ENCODE measurements at regions of chr4 and their contacts with region 1.

Region 1: GRCh38 chr4:183012879-183013728 is 86.0 kb upstream of the WWC2 start:
- DNase-seq: no peak
- ATAC-seq: no peak
- H3K4me3 ChIP-seq: no peak overlapping the region
- H3K27ac ChIP-seq: no peak overlapping the region
- H3K4me1 ChIP-seq: peaks cover 3% of the 10 kb centered on the region; the same call in 1 of the 2 replicates
- H3K27me3 ChIP-seq: peaks cover 62% of the 10 kb centered on the region
- CTCF ChIP-seq: no peak
- POLR2A ChIP-seq: no peak
- RAD21 ChIP-seq: no peak

Region 2: DNA sequence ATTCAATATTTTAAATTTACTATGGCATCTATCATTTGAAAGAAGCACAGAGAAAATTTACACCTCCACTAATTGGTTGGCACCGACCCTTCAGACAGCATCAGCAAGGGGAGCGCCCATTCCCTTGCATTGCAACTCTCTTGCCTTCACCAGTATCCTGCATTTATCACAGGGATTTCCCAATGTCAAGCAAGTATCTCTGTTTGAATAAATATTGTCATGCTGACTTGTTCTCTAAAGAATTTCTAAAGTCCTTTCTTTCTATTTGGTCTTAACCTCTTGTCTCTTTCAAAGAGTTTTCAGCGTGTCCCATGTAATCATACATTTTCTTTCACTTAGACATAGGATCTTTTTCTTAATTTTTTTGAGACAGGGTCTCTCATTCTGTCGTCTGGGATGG is 106.3 kb before region 1 on chr4:
- CTCF ChIA-PET with region 1: no interaction called
- POLR2A ChIA-PET with region 1: interaction called, 11 read pairs
- dilution Hi-C with region 1: no loop called
- in situ Hi-C with region 1: no loop called
- intact Hi-C with region 1: no loop called
- DNase-seq: peak; percentile 72
- ATAC-seq: peak; percentile 84
- H3K4me3 ChIP-seq: no peak overlapping the region
- H3K27ac ChIP-seq: peak overlapping the region; percentile 46; the same call in 1 of the 2 replicates
- H3K4me1 ChIP-seq: peaks cover 10% of the 10 kb centered on the region
- H3K27me3 ChIP-seq: no peaks in the 10 kb centered on the region
- CTCF ChIP-seq: no peak
- POLR2A ChIP-seq: no peak
- RAD21 ChIP-seq: no peak

Measured in IMR-90 (cell line).